ENCODE measurements at regions of chr2 and their contacts with region 1.

Region 1: GRCh38 chr2:130797493-130798435 is 39.0 kb upstream of the ARHGEF4 start:
- DNase-seq: peak; percentile 91 to 96 (median 92)
- ATAC-seq: peak; percentile 94 to 97 (median 96)
- H3K4me3 ChIP-seq: peak overlapping the region; percentile 50 to 90 (median 69)
- H3K27ac ChIP-seq: peak overlapping the region; percentile 52 to 95 (median 89)
- H3K4me1 ChIP-seq: peaks cover 0 to 13% (median 6%) of the 10 kb centered on the region in 12 donors
- H3K27me3 ChIP-seq: peaks cover 0 to under 1% (median 0%) of the 10 kb centered on the region in 9 donors
- CTCF ChIP-seq: peak; percentile 71 to 91 (median 84)
- POLR2A ChIP-seq: peak in 1 of 2 donors; percentile 36

Region 2: DNA sequence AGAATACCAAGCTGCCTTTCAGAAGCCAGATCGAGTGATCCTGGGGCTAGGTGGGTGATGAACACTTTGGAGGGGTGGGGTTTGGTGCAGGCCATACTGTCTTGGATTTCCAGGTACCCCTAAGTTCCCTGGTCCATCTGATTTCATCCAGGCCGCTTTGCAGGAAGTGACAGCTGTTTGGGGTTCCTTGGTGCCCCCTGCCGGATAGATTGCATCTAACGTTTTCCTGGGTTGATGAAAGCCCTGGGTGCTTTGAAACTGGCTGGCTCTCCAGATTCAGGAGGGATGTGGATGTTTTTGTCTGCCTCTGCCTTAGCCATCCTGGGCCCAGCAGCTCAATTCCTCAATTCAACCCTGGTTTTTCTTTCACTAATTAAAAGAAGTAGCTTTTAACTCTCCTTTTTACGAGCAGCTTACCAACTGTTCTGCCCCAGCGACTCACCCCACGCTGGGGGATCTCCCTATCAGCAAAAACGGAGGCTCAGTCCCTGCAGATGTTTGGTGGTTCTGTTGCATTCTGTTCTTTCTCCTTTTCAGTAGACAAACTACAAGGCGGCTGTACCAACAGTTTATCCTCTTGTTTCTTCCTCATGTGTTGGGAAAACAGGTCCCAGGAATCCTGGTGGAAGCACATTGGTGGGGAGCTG is 76.1 kb after region 1 on chr2:
- intact Hi-C with region 1: loop called (anchors 1 to 5 kb)
- DNase-seq: peak in 4 of 5 donors; percentile 57 to 72 (median 64)
- ATAC-seq: peak; percentile 50 to 74 (median 67)
- H3K4me3 ChIP-seq: no peak overlapping the region
- H3K27ac ChIP-seq: no peak overlapping the region
- H3K4me1 ChIP-seq: no peaks in the 10 kb centered on the region
- H3K27me3 ChIP-seq: peaks cover 0 to 11% (median 5%) of the 10 kb centered on the region in 9 donors
- CTCF ChIP-seq: peak; percentile 33 to 70 (median 59)
- POLR2A ChIP-seq: no peak

Region 3: DNA sequence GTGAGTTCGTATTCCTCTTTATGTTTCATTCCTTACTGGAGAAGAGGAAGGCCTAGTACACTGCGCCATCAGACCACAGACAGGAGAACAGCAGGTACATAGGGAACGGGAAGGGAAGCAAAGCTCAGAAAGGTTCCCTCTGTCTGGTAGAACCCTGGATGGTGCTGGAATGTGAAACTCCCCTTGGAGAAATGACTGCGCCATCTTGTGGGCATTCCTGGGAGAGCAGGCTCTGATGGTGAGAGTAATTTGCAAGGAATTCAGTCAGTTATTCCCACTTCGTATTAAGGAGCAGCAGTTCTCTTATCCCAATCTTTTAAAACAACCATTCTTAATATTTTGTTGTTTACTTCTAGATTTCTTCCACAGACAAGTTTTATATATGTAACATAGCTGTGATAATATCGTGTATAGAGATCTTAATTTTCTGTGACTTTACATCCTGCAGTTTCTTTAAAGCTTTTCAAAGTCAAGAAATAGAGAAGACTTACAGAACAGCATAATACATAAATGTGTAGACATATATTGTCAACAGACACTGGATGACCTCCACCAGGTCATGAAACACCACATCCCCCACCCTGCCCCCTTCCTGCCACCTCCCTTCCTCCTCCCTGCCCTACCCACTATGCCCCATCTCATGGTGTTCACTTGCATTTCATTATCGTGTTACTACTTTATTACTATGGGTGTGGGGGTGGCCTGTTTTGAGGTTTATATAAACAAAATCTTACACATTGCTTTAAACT is 122.8 kb after region 1 on chr2:
- intact Hi-C with region 1: loop called (anchors 1 to 5 kb)
- DNase-seq: peak in 3 of 5 donors; percentile 26 to 46 (median 35)
- ATAC-seq: peak in 2 of 4 donors; percentile 31 to 43
- H3K4me3 ChIP-seq: no peak overlapping the region
- H3K27ac ChIP-seq: no peak overlapping the region
- H3K4me1 ChIP-seq: no peaks in the 10 kb centered on the region
- H3K27me3 ChIP-seq: peaks cover 4 to 22% (median 12%) of the 10 kb centered on the region in 9 donors
- CTCF ChIP-seq: peak; percentile 63 to 81 (median 72)
- POLR2A ChIP-seq: no peak